Aorta (tissue), 5 donors: ENCODE measurements at regions of chr2 and their contacts with region 1.

Region 1: DNA sequence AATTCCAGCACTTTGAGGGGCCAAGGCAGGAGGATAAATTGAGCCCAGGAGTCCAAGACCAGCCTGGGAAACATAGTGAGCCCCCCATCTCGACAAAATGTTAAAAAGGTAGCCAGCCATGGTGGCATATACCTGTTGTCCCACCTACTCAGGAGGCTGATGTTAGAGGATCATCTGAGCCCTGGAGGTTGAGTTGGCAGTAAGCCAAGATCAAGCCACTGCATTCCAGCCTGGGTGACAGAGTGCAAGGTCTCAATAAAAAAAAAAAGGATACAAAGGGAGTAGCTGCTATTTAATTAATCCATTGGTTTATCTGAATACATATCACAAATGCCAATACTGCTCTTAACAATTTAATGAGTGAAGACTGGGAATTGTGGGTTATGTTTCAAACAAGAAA is 327.8 kb downstream of the CPS1 start:
- DNase-seq: no peak
- ATAC-seq: no peak
- H3K4me3 ChIP-seq: no peak overlapping the region
- H3K27ac ChIP-seq: no peak overlapping the region
- H3K4me1 ChIP-seq: no peaks in the 10 kb centered on the region
- H3K27me3 ChIP-seq: no peaks in the 10 kb centered on the region

Region 2: DNA sequence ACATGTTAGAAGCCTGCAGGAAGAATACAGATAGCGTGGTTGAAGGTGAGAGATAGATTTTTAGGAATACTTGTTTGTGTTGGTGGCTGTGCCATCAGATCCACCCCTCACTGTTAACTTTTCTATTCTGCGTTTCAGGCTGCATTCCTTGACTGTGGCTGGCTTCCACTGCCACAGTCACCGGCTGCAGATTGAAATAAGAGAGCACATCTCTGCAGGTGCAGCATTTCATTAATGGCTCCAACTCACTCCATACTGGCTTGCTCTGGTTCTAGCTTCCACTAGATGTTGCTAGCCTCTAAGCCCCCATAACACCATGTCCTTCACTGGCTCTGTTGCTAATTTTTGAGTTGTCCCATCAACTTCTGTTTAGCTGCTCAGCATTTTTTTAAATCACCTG is 41.3 kb before region 1 on chr2:
- intact Hi-C with region 1: no loop called
- DNase-seq: no peak
- ATAC-seq: no peak
- H3K4me3 ChIP-seq: no peak overlapping the region
- H3K27ac ChIP-seq: no peak overlapping the region
- H3K4me1 ChIP-seq: no peaks in the 10 kb centered on the region
- H3K27me3 ChIP-seq: no peaks in the 10 kb centered on the region

Region 3: GRCh38 chr2:210895132-210895531 is 10.9 kb after region 1 on chr2:
- intact Hi-C with region 1: loop called in 1 of 2 experiments (anchors 2 kb)
- DNase-seq: no peak
- ATAC-seq: no peak
- H3K4me3 ChIP-seq: no peak overlapping the region
- H3K27ac ChIP-seq: no peak overlapping the region
- H3K4me1 ChIP-seq: no peaks in the 10 kb centered on the region
- H3K27me3 ChIP-seq: no peaks in the 10 kb centered on the region

Region 4: GRCh38 chr2:211396815-211397214 is 512.6 kb after region 1 on chr2:
- intact Hi-C with region 1: no loop called
- DNase-seq: no peak
- ATAC-seq: no peak
- H3K4me3 ChIP-seq: no peak overlapping the region
- H3K27ac ChIP-seq: no peak overlapping the region
- H3K4me1 ChIP-seq: no peaks in the 10 kb centered on the region
- H3K27me3 ChIP-seq: no peaks in the 10 kb centered on the region